ENCODE measurements at regions of chr13 and their contacts with region 1.

Region 1: DNA sequence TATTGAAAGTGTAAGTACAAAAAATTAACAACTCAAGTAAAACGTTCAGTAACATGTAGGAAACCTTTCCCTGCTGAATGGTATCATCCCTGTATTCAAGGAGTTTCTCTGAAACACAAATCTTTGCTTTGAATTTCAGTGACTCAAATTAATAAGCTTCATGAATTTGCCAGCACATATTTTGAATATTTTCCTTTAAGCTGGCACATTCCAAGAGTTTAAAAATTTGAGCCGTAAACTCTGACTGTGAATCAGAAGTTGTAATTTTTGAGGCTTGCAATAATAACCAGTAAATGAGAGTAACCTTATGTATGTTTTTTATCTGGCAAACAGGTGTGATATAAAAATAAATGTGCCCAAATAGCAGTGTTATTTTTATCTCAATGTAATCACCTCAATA is 1722.6 kb upstream of the PRR20A start:
- DNase-seq: no peak
- H3K4me3 Mint-ChIP-seq: no peak overlapping the region
- H3K27ac Mint-ChIP-seq: no peak overlapping the region
- H3K4me1 Mint-ChIP-seq: no peaks in the 10 kb centered on the region
- H3K27me3 Mint-ChIP-seq: no peaks in the 10 kb centered on the region

Region 2: GRCh38 chr13:55160867-55161266 is 257.2 kb before region 1 on chr13:
- CTCF ChIA-PET with region 1: no interaction called
- POLR2A ChIA-PET with region 1: no interaction called
- intact Hi-C with region 1: no loop called
- DNase-seq: no peak
- H3K4me3 Mint-ChIP-seq: no peak overlapping the region
- H3K27ac Mint-ChIP-seq: no peak overlapping the region
- H3K4me1 Mint-ChIP-seq: no peaks in the 10 kb centered on the region
- H3K27me3 Mint-ChIP-seq: no peaks in the 10 kb centered on the region

Region 3: GRCh38 chr13:55439450-55439849 is 21.4 kb after region 1 on chr13:
- CTCF ChIA-PET with region 1: no interaction called
- POLR2A ChIA-PET with region 1: no interaction called
- intact Hi-C with region 1: loop called (anchors 1 kb)
- DNase-seq: no peak
- H3K4me3 Mint-ChIP-seq: no peak overlapping the region
- H3K27ac Mint-ChIP-seq: no peak overlapping the region
- H3K4me1 Mint-ChIP-seq: no peaks in the 10 kb centered on the region
- H3K27me3 Mint-ChIP-seq: no peaks in the 10 kb centered on the region

Region 4: DNA sequence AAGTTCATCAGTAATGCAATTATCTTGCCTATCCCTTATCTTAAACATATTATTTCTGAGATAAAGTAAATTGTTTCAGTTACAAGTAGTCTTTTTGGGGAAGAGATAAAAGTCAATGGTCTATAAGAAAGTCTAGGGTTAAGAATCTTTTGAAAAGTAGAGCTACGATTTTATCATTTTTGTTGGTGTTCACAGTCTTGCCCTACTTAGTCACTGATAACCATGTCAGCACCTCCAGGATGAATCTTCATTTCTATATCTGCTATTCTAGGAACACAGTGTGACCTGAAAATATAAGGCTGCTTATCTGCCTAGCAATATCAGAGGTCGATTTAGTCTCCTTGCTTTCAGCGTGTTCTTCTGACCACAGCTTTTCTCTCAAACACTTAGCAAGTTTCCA is 46.1 kb after region 1 on chr13:
- CTCF ChIA-PET with region 1: no interaction called
- POLR2A ChIA-PET with region 1: no interaction called
- intact Hi-C with region 1: no loop called
- DNase-seq: no peak
- H3K4me3 Mint-ChIP-seq: no peak overlapping the region
- H3K27ac Mint-ChIP-seq: no peak overlapping the region
- H3K4me1 Mint-ChIP-seq: no peaks in the 10 kb centered on the region
- H3K27me3 Mint-ChIP-seq: no peaks in the 10 kb centered on the region